ENCODE measurements at regions of chr5 and their contacts with region 1.

Region 1: GRCh38 chr5:134637161-134637582 is 4.5 kb upstream of the SAR1B start:
- H3K4me3 Mint-ChIP-seq: no peak overlapping the region
- H3K27ac Mint-ChIP-seq: no peak overlapping the region
- H3K4me1 Mint-ChIP-seq: peaks cover 4% of the 10 kb centered on the region
- H3K27me3 Mint-ChIP-seq: no peaks in the 10 kb centered on the region

Region 2: GRCh38 chr5:133091034-133091433 is 1546.1 kb before region 1 on chr5:
- intact Hi-C with region 1: no loop called
- H3K4me3 Mint-ChIP-seq: no peak overlapping the region
- H3K27ac Mint-ChIP-seq: no peak overlapping the region
- H3K4me1 Mint-ChIP-seq: peaks cover 4% of the 10 kb centered on the region
- H3K27me3 Mint-ChIP-seq: no peaks in the 10 kb centered on the region

Region 3: GRCh38 chr5:134365604-134366003 is 271.6 kb before region 1 on chr5:
- intact Hi-C with region 1: loop called (anchors 5 kb)
- H3K4me3 Mint-ChIP-seq: no peak overlapping the region
- H3K27ac Mint-ChIP-seq: no peak overlapping the region
- H3K4me1 Mint-ChIP-seq: peaks cover 27% of the 10 kb centered on the region
- H3K27me3 Mint-ChIP-seq: peaks cover 2% of the 10 kb centered on the region

Region 4: DNA sequence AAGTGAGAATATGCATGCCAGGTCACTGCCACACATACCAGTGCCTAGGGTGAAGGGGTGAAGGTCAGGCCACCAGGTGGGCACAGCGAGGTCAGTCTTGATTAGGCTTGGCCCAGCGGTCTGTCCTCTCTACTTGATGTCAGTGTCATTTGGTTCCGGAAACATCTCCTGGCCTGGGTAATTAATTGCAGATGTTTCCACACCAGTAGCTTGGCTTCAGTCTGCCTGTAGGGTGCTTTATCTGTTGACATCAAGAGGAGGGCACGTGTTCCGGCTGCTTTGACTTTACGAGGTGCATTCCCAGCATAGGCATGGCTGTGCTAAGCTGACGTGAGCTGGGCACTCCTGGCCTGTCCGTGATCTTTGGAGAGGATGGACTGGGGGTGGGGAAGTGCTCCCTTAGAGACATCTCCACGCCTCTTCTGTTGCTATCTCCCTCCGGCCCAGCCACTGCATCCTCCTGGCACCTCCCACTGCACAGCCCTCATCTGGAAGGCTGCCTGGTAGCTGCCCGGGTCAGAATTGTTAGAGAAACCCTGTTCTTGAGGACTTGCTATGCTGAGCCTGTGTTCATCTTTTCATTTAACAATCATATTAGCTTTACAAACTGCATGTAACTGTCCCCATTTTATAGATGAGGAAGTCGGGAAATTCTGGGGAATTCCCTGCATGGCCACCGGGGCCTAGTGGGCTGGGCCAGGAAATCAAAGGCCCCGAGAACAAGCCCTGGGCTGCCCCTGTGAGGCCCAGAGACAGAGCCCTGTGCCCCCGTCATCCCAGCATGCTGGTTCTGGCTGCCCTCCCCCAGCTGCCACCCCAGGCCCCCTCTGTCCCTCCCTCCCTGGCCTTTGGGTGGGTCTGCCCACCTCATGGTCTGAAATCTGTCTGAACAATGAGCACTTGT is 82.6 kb before region 1 on chr5:
- intact Hi-C with region 1: no loop called
- H3K4me3 Mint-ChIP-seq: peak overlapping the region; percentile 43
- H3K27ac Mint-ChIP-seq: peak overlapping the region; percentile 90
- H3K4me1 Mint-ChIP-seq: peaks cover 42% of the 10 kb centered on the region
- H3K27me3 Mint-ChIP-seq: no peaks in the 10 kb centered on the region

Region 5: GRCh38 chr5:134648425-134649162 is 11.4 kb after region 1 on chr5 and contains the start of gene SEC24A:
- intact Hi-C with region 1: loop called (anchors 1 kb)
- H3K4me3 Mint-ChIP-seq: peak within 1 kb of the TSS; percentile 99
- H3K27ac Mint-ChIP-seq: peak within 1 kb of the TSS; percentile 100
- H3K4me1 Mint-ChIP-seq: peaks cover 7% of the 10 kb centered on the region
- H3K27me3 Mint-ChIP-seq: no peaks in the 10 kb centered on the region

Measured in dendritic cell treated with granulocyte-macrophage colony-stimulating factor and Interleukin-4, amounts not matched to agents 40 ng/mL and 50 ng/mL, for 4 days (primary cell).